ENCODE measurements at regions of chr5 and their contacts with region 1.

Region 1: DNA sequence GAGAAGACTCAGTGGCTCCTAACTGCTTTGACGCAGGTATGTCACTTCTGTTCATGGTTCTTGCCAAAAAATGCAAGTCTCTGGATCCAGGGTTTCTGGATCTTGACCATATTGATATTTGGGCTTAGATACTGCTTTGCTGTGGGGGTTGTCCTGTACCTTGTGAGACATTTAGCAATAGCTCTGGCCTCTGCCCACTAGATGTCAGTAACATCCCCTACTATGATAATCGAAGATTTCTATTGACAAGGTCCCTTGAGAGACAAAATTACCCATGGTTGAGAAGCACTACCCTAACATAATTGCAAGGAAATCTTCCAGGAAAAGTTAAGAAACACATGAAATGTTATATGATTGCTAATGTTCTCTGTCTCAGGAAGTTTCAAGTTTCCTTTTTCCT is 285.4 kb downstream of the TMEM232 start:
- DNase-seq: peak; percentile 22
- ATAC-seq: no peak
- H3K4me3 ChIP-seq: no peak overlapping the region
- H3K27ac ChIP-seq: no peak overlapping the region
- H3K4me1 ChIP-seq: no peaks in the 10 kb centered on the region
- H3K27me3 ChIP-seq: no peaks in the 10 kb centered on the region
- CTCF ChIP-seq: peak; percentile 52

Region 2: DNA sequence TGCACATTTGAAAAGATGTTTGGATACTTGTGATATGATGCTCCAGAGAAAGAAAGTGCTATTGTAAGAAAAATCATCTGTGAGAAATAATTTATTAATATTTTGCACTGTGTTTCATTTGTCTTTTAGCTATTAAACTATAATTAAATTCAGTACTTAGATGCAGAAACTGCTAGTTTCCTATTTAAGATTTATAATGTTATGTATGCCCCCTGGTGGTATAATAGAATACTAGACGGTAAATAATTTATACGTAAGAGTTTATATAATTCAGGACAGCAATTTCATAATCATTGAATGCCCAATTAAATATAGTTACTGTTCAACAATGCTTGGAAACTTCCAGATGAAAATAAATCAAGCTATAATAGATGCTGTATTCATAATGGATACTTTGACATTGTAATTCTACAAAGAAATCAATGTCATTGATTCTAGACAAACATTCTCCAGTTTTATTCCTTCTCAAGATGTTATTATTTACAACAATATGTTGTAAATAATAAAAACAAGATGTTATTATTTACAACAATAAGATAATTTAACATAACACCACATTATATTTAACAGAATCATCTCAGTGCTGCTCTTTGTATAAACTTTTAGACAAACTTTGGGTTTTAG is 184.5 kb after region 1 on chr5:
- CTCF ChIA-PET with region 1: no interaction called
- POLR2A ChIA-PET with region 1: no interaction called
- in situ Hi-C with region 1: no loop called
- intact Hi-C with region 1: loop called (anchors 2 kb)
- DNase-seq: no peak
- ATAC-seq: no peak
- H3K4me3 ChIP-seq: no peak overlapping the region
- H3K27ac ChIP-seq: no peak overlapping the region
- H3K4me1 ChIP-seq: no peaks in the 10 kb centered on the region
- H3K27me3 ChIP-seq: no peaks in the 10 kb centered on the region; the same call in 1 of the 2 replicates
- CTCF ChIP-seq: peak; percentile 22; the same call in 1 of the 2 replicates